ENCODE measurements at regions of chr4 and their contacts with region 1.

Region 1: DNA sequence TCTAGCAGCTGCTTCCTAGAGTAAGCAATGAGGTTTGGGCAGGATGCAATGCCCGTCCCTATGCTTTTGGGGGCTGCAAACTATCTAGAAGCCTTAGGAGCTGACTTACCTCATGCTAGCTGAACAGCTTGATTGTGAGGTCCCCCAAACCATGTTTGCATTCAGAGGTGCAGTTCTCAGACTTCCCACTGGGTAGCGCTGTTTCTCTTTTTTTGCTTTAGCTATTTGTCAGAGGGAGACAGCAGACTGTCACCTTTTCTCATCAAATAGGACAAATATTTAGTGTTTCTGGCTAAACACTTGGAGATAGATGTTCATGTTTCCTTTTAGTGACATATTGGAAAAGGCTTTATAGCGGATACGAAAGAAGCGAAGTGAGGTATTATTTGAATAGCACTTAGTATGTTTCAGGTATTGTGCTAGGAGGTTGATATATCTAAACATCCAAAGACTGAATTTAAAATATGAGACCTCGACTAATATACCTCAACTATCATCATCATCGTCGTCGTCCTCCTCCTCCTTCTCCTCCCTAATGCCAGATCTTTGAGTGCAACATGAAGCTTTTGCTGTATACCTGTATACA is 18.7 kb upstream of the TMEM192 start:
- DNase-seq: peak in 8 of 10 donors; percentile 29 to 89 (median 81)

Region 2: DNA sequence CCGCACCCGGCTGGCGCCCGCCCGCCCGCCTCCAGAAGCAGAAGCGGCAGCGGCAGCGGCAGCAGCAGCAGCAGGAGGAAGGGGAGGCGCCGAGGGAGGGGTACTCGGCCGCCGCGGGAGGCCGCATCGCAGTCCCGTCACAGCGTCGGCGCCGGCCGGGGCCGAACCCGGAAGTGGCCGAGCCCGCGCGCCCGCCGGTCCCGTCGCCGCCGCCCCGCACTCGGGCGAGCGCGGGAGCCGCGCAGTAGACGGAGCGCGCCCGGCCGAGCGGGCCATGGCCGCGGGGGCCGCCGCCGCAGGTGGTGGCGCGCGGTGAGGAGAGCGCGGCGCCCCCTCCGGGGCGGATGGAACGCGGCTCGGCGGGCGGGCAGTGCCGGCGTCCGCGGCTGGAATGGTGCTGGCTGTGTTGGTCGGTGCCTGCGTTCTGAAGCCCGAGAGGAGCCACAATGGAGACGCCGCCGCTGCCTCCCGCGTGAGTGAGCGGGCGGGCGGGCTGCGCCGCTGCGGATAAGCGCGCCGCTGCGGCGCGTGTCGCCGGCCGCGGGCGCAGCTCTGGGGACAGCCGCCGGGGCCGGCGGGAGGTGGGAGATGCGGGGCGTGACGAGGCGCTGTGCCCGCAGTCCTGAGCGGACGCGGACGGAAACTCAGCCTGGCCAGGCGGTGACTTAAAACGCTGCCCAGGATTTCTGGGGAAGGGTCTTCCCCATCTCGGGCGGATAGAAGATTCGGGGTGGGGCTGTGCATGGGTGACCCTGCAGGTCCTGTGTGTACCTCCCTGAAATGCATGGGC is 76.3 kb after region 1 on chr4 and contains the start of gene KLHL2:
- intact Hi-C with region 1: loop called (anchors 5 kb)
- DNase-seq: peak; percentile 59 to 97 (median 78)

Region 3: GRCh38 chr4:165345666-165346417 is 214.5 kb after region 1 on chr4:
- intact Hi-C with region 1: loop called (anchors 5 kb)
- DNase-seq: no peak

Region 4: DNA sequence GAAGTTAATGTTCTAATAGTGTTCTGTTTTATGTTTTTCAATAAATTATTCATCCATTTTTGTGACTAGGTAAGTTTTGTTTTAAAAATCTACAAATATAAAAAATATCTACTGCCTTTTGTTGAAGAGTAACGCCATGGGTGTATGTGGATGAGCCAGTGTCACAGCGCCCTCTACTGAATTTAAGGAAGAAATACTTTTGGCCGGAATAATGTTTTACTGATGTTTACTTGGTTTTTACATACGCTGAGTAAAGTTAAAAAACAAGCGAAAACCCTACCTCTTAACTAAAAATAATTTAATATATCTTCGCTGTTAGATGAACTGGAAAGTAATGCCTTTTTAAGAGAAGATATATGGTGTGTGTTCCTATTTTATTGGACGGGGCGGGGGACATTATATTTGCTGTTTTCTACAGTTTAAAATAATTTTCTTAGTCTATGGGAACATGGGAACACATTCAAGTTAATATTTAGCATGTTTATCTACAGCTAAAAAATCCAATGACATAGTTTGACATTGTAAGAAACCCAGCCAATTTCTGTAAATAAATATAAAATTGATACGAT is 333.6 kb after region 1 on chr4:
- intact Hi-C with region 1: loop called (anchors 1 kb)
- DNase-seq: no peak

Region 5: GRCh38 chr4:166091912-166092510 is 960.7 kb after region 1 on chr4:
- intact Hi-C with region 1: loop called (anchors 10 kb)
- DNase-seq: no peak

Measured in posterior cingulate gyrus (tissue), 11 donors.